H1 (cell line): ENCODE measurements at regions of chr12 and their contacts with region 1.

Region 1: DNA sequence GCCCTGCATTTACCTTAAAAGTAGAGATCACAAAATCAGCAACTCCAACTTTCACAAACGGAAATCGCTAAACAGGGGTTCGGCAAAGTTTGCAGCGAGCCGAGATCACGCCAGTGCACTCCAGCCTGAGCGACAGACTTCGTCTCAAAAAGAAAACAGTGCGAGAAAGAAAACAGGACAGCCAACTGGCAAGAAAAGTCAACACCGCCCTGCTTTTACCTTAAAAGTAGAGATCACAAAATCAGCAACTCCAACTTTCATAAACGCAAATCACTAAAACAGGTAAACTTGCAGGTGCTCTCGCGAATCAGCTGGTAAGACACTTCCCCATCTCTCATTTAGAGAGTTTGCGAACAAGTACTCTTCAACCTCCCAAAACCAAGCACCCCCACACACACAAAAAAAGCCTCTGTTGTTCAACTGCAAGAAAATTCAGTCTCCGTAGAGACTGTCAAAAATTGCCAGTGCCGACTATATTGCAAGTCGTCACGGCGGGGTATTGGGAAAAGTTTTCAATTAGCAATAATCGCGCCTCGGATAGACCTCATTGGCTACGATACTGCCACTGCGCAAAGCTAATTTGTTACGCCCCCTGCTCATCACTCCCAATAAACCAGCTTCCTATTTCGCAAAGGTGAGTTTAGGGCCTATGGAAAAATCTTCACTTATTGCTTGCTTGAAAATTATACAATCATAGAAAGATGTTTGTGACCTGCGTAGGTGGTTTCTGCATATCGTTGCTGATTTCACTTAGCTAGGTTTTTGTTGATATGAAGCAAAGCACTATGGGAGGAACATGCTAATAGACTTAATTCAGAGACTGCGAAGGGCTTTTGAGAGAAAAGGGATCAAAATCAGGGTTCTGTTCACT is at the start of gene RNU4-1:
- DNase-seq: peak; percentile 75 to 80
- H3K4me3 ChIP-seq: peak within 1 kb of the TSS; percentile 72 to 91 (median 73)
- H3K27ac ChIP-seq: peak within 1 kb of the TSS; percentile 100
- H3K4me1 ChIP-seq: peaks cover 4% of the 10 kb centered on the region in 4 experiments; a peak in 6 of 7 replicates
- H3K27me3 ChIP-seq: no peaks in the 10 kb centered on the region
- CTCF ChIP-seq: no peak
- EP300 ChIP-seq: peak in 1 of 2 experiments; percentile 22; a peak in 1 of 3 replicates
- POLR2A ChIP-seq: peak; percentile 100
- RAD21 ChIP-seq: no peak
- total RNA-seq, gene RNU4-1: 1,424 and 1,786 TPM in 2 replicates

Region 2: GRCh38 chr12:119565404-119565803 is 727.5 kb before region 1 on chr12:
- CTCF ChIA-PET with region 1: no interaction called
- POLR2A ChIA-PET with region 1: no interaction called
- DNase-seq: no peak
- H3K4me3 ChIP-seq: no peak overlapping the region
- H3K27ac ChIP-seq: no peak overlapping the region
- H3K4me1 ChIP-seq: no peaks in the 10 kb centered on the region
- H3K27me3 ChIP-seq: no peaks in the 10 kb centered on the region
- CTCF ChIP-seq: no peak
- EP300 ChIP-seq: no peak
- POLR2A ChIP-seq: no peak
- RAD21 ChIP-seq: no peak

Region 3: GRCh38 chr12:119988782-119989668 is 303.9 kb before region 1 on chr12 and contains the start of gene BICDL1:
- CTCF ChIA-PET with region 1: no interaction called
- POLR2A ChIA-PET with region 1: interaction called, 10 read pairs
- DNase-seq: peak; percentile 93 to 96
- H3K4me3 ChIP-seq: peak within 1 kb of the TSS; percentile 59 to 69 (median 62)
- H3K27ac ChIP-seq: no peak within 1 kb of the TSS
- H3K4me1 ChIP-seq: peaks cover 6 to 11% (median 9%) of the 10 kb centered on the region in 4 experiments
- H3K27me3 ChIP-seq: no peaks in the 10 kb centered on the region; a peak in 2 of 7 replicates
- CTCF ChIP-seq: no peak
- EP300 ChIP-seq: no peak
- POLR2A ChIP-seq: no peak
- RAD21 ChIP-seq: no peak
- total RNA-seq, gene BICDL1: 25.9 and 26.9 TPM in 2 replicates

Region 4: DNA sequence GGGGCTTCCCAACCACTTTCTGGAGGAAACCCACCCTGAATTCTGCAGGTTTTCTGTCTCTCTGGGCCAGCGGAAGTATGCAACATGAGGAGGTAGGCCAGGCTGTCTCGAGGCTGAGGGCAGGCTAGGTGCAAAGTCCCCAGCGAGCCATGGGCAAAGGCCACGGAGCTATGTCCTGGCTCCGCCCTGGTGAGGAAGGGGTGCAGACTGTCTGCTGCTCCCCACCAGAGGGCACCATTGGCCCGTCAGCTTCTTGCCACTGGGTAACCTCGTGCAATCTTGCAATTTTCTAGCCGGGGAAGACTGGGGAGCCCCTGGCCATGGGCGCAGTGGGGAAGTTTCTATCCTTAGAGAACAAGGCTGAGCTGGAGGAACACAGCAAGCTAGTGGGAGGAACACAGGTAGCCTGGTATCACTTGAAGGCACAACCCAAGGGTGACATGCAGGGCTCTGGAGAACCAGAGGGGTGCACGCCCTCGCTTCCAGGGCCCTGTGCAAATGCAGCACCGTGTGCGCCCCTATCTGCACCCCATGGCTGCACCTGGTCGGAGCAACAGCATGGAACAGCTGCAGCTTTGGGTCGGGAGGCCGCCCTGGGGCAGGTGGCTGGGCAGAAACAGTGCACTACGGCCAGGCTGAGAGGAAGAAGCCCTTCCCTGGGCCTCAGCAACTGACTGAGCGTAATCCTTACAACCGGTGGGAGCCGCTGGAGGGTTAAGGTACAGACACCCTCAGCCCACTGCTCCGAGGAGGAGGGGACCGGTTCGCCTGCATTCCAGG is 64.4 kb before region 1 on chr12:
- CTCF ChIA-PET with region 1: interaction called, 148 read pairs
- POLR2A ChIA-PET with region 1: interaction called, 4,270 read pairs
- DNase-seq: peak; percentile 90 to 93
- H3K4me3 ChIP-seq: peak overlapping the region in 3 of 4 experiments; percentile 30 to 53 (median 49); a peak in 5 of 8 replicates
- H3K27ac ChIP-seq: peak overlapping the region; percentile 96
- H3K4me1 ChIP-seq: peaks cover 33 to 69% (median 42%) of the 10 kb centered on the region in 4 experiments
- H3K27me3 ChIP-seq: no peaks in the 10 kb centered on the region
- CTCF ChIP-seq: peak in 2 of 3 experiments; percentile 92 to 99; a peak in 3 of 4 replicates
- EP300 ChIP-seq: peak in 1 of 2 experiments; percentile 97; a peak in 1 of 3 replicates
- POLR2A ChIP-seq: peak in 1 of 2 experiments; percentile 77; a peak in 2 of 3 replicates
- RAD21 ChIP-seq: peak; percentile 97 to 98

Region 5: DNA sequence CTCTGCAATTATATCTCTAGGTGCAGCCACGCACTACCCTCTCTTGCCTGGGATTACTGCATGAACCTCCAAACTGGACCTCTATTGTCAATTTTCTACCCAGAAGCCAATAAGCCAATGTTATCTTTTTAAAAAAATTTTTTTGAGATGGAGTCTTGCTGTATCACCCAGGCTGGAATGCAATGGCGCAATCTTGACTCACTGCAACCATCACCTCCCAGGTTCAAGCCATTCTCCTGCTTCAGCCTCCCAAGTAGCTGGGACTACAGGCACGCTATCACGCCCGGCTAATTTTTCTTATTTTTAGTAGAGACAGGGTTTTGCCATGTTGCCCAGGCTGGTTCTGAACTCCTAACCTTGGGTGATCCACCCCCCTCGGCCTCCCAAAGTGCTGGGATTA is 16.2 kb before region 1 on chr12:
- CTCF ChIA-PET with region 1: no interaction called
- POLR2A ChIA-PET with region 1: interaction called, 4,270 read pairs
- DNase-seq: no peak
- H3K4me3 ChIP-seq: no peak overlapping the region
- H3K27ac ChIP-seq: no peak overlapping the region
- H3K4me1 ChIP-seq: no peaks in the 10 kb centered on the region
- H3K27me3 ChIP-seq: no peaks in the 10 kb centered on the region
- CTCF ChIP-seq: no peak
- EP300 ChIP-seq: no peak
- POLR2A ChIP-seq: no peak
- RAD21 ChIP-seq: no peak

Region 6: DNA sequence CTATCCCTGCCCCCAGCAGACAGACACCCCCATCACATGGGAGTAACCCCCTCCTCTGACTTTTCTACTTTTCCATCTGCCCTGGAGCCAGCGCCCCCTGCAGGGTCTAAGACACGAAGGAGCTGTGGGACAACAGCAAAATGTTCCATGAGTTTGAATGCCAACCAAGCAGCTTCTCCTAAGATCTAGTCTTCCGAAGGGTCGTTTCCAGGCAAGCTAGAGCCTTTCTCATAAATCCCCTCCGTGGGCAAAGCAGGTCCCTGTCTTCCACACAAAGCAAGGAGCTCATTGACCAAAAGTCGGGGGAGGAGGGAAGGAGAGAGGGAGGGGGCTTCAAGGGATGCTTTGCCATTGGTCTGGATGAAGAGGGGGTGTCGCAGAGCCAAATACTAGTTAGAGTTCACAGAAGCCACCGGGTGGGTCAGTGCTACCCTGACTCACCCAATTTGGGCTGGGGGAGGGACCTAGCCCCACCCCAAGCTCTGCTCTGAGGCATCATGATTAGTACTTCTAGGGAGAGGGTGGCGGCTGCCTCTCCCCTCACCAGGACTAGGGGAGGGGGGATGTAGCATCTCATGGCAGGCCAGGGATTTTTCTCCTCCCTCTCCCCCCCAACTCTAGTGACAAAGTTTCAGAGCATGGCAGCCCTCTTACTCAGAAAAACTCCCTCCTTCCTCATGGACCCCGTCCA is 74.5 kb after region 1 on chr12:
- CTCF ChIA-PET with region 1: no interaction called
- POLR2A ChIA-PET with region 1: interaction called, 22 read pairs
- DNase-seq: peak in 1 of 2 experiments; percentile 79
- H3K4me3 ChIP-seq: peak overlapping the region; percentile 48 to 84 (median 65)
- H3K27ac ChIP-seq: no peak overlapping the region
- H3K4me1 ChIP-seq: peaks cover 20 to 35% (median 26%) of the 10 kb centered on the region in 4 experiments
- H3K27me3 ChIP-seq: peaks cover 0 to 8% (median 6%) of the 10 kb centered on the region in 4 experiments; a peak in 4 of 7 replicates
- CTCF ChIP-seq: peak; percentile 60 to 76 (median 66)
- EP300 ChIP-seq: no peak
- POLR2A ChIP-seq: no peak
- RAD21 ChIP-seq: peak; percentile 33 to 54; a peak in 2 of 4 replicates

Region 7: DNA sequence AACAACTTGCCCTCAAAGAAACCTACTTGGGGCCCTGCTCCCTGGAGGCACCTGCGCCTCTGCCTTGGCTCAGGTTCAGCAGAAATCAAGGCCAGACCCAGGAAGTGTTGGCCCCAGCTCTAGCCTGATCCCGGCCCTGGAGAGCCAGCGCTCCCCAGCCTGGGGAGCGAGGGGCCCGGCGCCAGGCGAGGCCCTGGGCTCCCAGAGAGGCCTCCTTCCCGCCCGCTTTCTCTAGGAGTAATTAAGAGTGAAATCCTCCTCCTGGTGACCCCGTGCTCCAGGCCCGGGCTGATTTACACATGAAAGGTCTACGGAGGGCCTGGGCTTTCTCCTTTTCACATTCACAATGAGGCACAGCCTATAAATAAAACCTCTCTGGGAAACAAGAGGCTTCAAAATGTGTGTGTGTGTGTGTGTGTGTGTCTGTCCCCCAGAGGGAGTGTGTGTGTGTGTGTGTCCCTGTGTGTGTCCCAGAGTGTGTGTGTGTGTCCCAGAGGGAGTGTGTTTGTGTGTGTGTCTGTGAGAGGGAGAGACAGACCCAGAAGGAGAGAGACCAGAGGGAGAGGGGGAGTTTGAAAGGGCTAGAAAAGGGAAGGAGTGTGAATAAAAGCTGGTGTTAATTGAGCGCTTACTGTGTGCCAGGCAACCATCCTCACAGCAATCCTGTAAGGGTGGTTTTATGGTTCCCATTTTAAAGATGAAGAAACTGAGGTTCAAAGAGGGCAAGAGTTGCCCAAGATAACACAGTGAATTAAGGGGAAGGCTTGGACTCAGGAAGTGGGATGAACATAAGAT is 121.2 kb after region 1 on chr12:
- CTCF ChIA-PET with region 1: no interaction called
- POLR2A ChIA-PET with region 1: interaction called, 14 read pairs
- DNase-seq: peak; percentile 80 to 89
- H3K4me3 ChIP-seq: peak overlapping the region in 3 of 4 experiments; percentile 6 to 36 (median 23); a peak in 4 of 8 replicates
- H3K27ac ChIP-seq: peak overlapping the region; percentile 70; the same call in 1 of the 2 replicates
- H3K4me1 ChIP-seq: peaks cover 0 to 10% (median 6%) of the 10 kb centered on the region in 4 experiments; a peak in 3 of 7 replicates
- H3K27me3 ChIP-seq: no peaks in the 10 kb centered on the region
- CTCF ChIP-seq: no peak
- EP300 ChIP-seq: no peak; a peak in 1 of 3 replicates
- POLR2A ChIP-seq: peak; percentile 51 to 80
- RAD21 ChIP-seq: peak; percentile 1 to 14; a peak in 2 of 4 replicates

Region 8: GRCh38 chr12:120469450-120470149 is 176.7 kb after region 1 on chr12 and contains the start of gene SRSF9:
- CTCF ChIA-PET with region 1: no interaction called
- POLR2A ChIA-PET with region 1: interaction called, 25 read pairs
- DNase-seq: peak; percentile 89 to 99
- H3K4me3 ChIP-seq: peak within 1 kb of the TSS; percentile 76 to 97 (median 78)
- H3K27ac ChIP-seq: peak within 1 kb of the TSS; percentile 96
- H3K4me1 ChIP-seq: peaks cover 0 to 5% (median 0%) of the 10 kb centered on the region in 4 experiments; a peak in 2 of 7 replicates
- H3K27me3 ChIP-seq: no peaks in the 10 kb centered on the region
- CTCF ChIP-seq: peak; percentile 73 to 86 (median 78)
- EP300 ChIP-seq: no peak
- POLR2A ChIP-seq: peak; percentile 66 to 89
- RAD21 ChIP-seq: peak in 1 of 2 experiments; percentile 37; a peak in 2 of 4 replicates
- total RNA-seq, gene SRSF9: 304 and 307 TPM in 2 replicates